ENCODE measurements at regions of chr12 and their contacts with region 1.

Region 1: GRCh38 chr12:27703710-27704452 is 6.8 kb upstream of the MRPS35 start:
- DNase-seq: peak; percentile 47 to 82 (median 58)
- ATAC-seq: peak; percentile 96
- H3K4me3 ChIP-seq: no peak overlapping the region
- H3K27ac ChIP-seq: no peak overlapping the region
- H3K4me1 ChIP-seq: peaks cover 0 to 3% of the 10 kb centered on the region in 2 experiments; a peak in 1 of 5 replicates
- H3K27me3 ChIP-seq: peaks cover 6 to 19% of the 10 kb centered on the region in 2 experiments; a peak in 4 of 5 replicates
- CTCF ChIP-seq: peak; percentile 79 to 91 (median 82)
- EP300 ChIP-seq: peak; percentile 82
- POLR2A ChIP-seq: no peak
- RAD21 ChIP-seq: peak; percentile 78 to 80

Region 2: DNA sequence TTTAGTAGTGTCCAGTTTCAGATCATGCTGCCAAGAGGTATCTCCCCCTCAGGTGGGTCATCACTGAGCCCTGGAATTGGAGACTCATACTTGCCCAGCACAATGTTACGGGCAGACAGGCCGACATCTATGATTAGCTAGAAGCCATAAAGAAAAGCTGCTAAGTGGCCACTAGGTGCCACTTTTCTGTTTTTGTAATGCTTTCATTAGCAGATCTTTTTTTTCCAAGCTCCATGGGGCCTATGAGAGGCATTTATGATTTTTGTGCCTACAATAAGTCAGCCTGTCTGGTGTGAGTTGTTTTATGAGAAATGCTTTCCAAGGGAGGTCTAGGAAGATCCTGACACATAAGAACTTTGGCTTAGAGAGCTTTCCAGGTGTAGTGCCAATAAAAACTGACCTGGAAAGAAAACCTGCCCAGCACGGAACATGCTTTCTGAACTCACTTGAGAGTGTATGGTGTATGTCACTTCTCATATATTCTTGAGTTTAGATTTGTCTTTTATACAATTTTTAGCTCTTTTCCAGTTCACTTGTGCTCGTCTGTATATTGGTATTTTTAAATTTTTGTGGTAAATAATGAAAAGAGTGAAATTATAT is 279.1 kb before region 1 on chr12:
- CTCF ChIA-PET with region 1: no interaction called
- POLR2A ChIA-PET with region 1: no interaction called
- in situ Hi-C with region 1: no loop called
- intact Hi-C with region 1: loop called (anchors 1 kb)
- DNase-seq: peak in 2 of 4 experiments; percentile 24 to 26
- ATAC-seq: peak; percentile 75
- H3K4me3 ChIP-seq: no peak overlapping the region
- H3K27ac ChIP-seq: no peak overlapping the region
- H3K4me1 ChIP-seq: no peaks in the 10 kb centered on the region; a peak in 1 of 5 replicates
- H3K27me3 ChIP-seq: peaks cover 0 to 2% of the 10 kb centered on the region in 2 experiments; a peak in 1 of 5 replicates
- CTCF ChIP-seq: peak; percentile 27 to 54 (median 46); a peak in 4 of 6 replicates
- EP300 ChIP-seq: no peak
- POLR2A ChIP-seq: no peak
- RAD21 ChIP-seq: peak; percentile 28 to 57; a peak in 3 of 4 replicates

Region 3: DNA sequence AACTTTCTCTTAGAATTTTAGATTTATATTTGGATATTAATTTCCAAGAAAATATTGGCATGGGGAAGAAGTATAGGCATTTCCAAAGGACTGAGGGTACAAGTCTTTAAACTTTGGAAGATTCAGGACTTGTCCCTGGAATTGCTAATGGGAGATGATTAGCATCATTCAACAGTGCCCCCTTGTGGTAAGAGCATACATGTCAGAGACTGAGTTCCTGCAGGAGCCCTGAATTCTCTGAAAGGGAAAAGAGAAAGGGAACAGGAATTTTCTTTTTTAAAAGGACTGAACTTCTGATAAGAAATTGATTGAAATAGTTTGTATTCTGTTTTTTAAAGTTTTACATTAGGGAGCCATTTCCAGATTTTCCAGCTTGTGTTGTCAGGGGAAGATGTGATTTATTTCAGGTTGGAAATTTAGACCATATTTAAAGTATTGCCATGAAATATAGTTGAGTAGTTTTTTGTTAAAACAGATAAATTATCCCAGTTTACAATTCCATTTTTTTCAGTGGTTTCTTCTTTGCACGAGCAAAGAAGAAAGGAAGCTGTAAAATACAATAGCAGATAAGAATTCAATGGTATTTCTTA is 51.6 kb before region 1 on chr12:
- CTCF ChIA-PET with region 1: no interaction called
- POLR2A ChIA-PET with region 1: no interaction called
- in situ Hi-C with region 1: no loop called
- intact Hi-C with region 1: loop called (anchors 5 kb)
- DNase-seq: peak; percentile 59 to 72 (median 61)
- ATAC-seq: peak; percentile 70
- H3K4me3 ChIP-seq: no peak overlapping the region
- H3K27ac ChIP-seq: no peak overlapping the region
- H3K4me1 ChIP-seq: no peaks in the 10 kb centered on the region
- H3K27me3 ChIP-seq: no peaks in the 10 kb centered on the region
- CTCF ChIP-seq: peak; percentile 59 to 72 (median 71)
- EP300 ChIP-seq: no peak
- POLR2A ChIP-seq: no peak
- RAD21 ChIP-seq: peak; percentile 63 to 72

Region 4: GRCh38 chr12:28035500-28035899 is 331.6 kb after region 1 on chr12:
- CTCF ChIA-PET with region 1: no interaction called
- POLR2A ChIA-PET with region 1: no interaction called
- in situ Hi-C with region 1: no loop called
- intact Hi-C with region 1: no loop called
- DNase-seq: peak; percentile 12 to 68 (median 28)
- ATAC-seq: peak; percentile 70; the same call in 2 of the 3 replicates
- H3K4me3 ChIP-seq: no peak overlapping the region
- H3K27ac ChIP-seq: peak overlapping the region; percentile 52; the same call in 1 of the 3 replicates
- H3K4me1 ChIP-seq: peaks cover 0 to 9% of the 10 kb centered on the region in 2 experiments; a peak in 3 of 5 replicates
- H3K27me3 ChIP-seq: no peaks in the 10 kb centered on the region
- CTCF ChIP-seq: no peak
- EP300 ChIP-seq: no peak
- POLR2A ChIP-seq: no peak
- RAD21 ChIP-seq: no peak

Measured in K562 (cell line).